ENCODE measurements at regions of chr5 and their contacts with region 1.

Region 1: GRCh38 chr5:158265931-158266700 is 407.2 kb upstream of the CLINT1 start:
- DNase-seq: no peak
- H3K4me3 ChIP-seq: no peak overlapping the region
- H3K27ac ChIP-seq: no peak overlapping the region
- H3K4me1 ChIP-seq: peaks cover 18% of the 10 kb centered on the region
- CTCF ChIP-seq: no peak

Region 2: DNA sequence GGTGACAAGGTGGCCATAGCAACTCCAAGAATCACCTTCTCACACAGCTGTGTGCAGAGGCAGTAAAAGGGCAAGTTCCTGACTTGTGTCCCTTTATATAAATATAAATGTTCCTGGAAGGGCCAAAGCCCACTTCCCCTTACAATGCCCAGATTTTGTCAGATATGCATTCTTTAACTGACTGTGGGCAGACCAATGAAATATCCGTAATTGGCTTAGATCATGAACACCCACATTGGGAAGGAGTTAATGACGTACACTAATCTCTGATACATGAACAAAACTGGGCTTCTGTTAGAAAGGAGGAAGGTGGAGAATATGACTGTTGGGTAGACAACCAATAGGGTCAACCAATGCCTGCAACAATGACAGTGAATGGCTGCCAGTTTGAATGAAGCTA is 10.0 kb before region 1 on chr5:
- CTCF ChIA-PET with region 1: no interaction called
- POLR2A ChIA-PET with region 1: interaction called, 22 read pairs
- intact Hi-C with region 1: no loop called
- DNase-seq: no peak
- H3K4me3 ChIP-seq: no peak overlapping the region
- H3K27ac ChIP-seq: no peak overlapping the region
- H3K4me1 ChIP-seq: no peaks in the 10 kb centered on the region
- CTCF ChIP-seq: no peak

Measured in OCI-LY7 (cell line).